GM12878 (cell line): ENCODE measurements at regions of chr3 and their contacts with region 1.

Region 1: DNA sequence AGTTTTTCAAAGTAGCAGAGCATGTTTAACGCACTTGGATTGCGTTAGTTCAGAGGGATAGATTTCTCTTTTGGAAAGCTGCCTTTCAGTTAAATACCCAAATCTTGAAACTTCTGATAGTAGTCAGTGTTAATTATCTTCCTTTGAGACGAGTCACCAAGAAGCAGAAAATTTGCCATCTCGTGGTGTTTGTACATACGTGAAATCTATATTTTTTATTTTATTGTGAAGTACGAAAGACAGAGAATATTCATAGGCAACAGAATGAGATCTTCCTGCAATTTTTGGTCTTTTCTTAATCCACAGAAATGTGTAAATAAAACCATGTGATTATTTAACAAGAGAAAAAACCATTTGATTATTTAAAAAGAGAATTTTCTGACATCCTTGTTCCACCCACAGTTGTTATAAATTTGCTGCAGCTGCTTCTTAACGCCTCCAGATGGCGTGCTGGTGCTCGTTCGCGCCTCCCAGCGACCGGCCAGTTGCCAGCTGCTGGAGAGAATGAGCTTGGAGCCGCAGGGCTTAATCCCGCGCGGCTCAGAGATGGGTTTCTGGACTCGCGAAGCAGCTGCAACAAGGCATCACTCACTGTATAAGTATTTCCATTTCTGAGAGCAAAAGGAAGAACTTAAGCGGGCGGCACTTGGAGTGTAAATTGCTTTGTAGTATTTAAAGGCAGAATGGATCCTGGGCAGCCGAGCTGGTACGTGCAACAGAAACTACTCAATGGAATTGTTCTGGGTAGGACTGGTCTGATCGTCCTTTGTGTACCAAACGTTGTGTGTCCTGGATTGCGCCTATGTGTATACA is 10.5 kb upstream of the SLITRK3 start:
- DNase-seq: no peak
- ATAC-seq: peak; percentile 89
- H3K4me3 ChIP-seq: no peak overlapping the region
- H3K27ac ChIP-seq: no peak overlapping the region
- H3K4me1 ChIP-seq: no peaks in the 10 kb centered on the region
- H3K27me3 ChIP-seq: no peaks in the 10 kb centered on the region
- CTCF ChIP-seq: peak; percentile 82 to 95 (median 90)
- EP300 ChIP-seq: no peak
- POLR2A ChIP-seq: no peak
- RAD21 ChIP-seq: peak; percentile 73

Region 2: DNA sequence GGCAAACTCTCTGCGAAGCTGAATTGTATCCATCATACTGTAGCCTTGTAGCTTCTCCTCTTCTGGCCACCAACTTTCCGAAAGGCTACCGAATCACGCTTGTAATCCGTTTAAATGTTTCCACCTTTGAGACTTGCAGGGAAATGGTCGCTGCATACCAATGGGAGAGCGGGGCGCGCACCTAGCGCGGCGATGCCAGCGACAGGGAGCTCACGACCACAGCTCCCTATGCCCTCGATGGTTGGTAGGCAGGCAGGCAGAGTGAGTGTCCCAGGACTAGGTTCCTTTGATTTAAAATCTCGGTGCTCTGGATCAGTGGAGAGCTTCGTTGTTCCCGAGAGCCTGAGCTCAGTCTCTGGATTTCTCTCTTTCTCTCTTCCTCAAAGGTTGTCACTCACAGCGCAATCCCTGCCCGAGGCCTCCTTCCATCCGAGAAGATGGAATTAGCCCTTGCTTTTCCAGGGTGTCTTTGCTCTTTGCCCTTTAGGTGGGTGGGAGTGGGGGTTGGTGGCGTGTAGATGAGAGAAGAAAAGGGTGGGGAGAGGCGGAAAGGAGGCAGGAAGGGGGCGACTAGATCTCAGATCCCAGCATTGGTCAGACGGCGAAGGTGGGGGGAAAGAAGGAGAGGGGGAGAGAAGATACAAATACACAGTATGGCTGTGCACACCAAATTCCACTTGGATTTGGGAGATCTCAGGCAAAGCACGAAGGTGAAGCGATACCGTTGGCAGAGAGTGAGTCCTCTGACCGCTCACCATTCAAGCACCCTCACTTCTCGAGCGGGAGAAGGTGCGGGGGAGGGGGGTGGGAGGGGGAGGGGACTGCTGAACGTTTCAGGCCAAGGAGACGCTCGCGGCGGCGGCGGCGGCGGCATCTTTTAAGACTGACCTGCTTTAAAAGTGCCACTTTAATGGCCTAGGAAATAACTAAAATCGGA is 10.8 kb before region 1 on chr3 and contains the start of gene SLITRK3:
- CTCF ChIA-PET with region 1: interaction called, 19 read pairs
- POLR2A ChIA-PET with region 1: interaction called, 5 read pairs
- RAD21 ChIA-PET with region 1: interaction called, 3 read pairs
- SMC1A ChIA-PET with region 1: interaction called, 3 read pairs
- in situ Hi-C with region 1: no loop called
- intact Hi-C with region 1: no loop called
- DNase-seq: no peak
- ATAC-seq: no peak; the same call in 2 of the 3 replicates
- H3K4me3 ChIP-seq: no peak within 1 kb of the TSS
- H3K27ac ChIP-seq: no peak within 1 kb of the TSS
- H3K4me1 ChIP-seq: no peaks in the 10 kb centered on the region
- H3K27me3 ChIP-seq: peaks cover 7 to 11% of the 10 kb centered on the region in 2 experiments
- CTCF ChIP-seq: no peak
- EP300 ChIP-seq: no peak
- POLR2A ChIP-seq: no peak
- RAD21 ChIP-seq: no peak
- polyA plus RNA-seq, gene SLITRK3: not detected

Region 3: DNA sequence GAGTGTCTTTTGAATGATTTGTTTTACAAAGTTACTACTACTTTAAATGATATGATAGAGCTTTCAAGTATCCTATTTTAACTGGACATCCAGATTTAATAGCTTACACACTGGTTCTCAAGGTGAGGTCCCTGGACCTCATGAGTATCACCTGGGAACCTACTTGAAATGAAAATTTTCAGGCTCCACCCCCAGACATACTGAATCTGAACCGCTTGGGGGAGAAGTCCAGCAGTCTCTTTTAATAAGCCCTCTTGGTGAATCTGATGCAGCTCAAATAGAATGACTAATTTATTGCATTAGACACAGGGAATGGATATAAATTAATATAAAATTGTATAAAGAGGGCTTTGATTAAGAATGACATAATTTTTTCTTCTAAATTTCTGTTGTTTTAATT is 18.9 kb after region 1 on chr3:
- CTCF ChIA-PET with region 1: interaction called, 10 read pairs
- POLR2A ChIA-PET with region 1: no interaction called
- RAD21 ChIA-PET with region 1: interaction called, 3 read pairs
- SMC1A ChIA-PET with region 1: no interaction called
- in situ Hi-C with region 1: no loop called
- intact Hi-C with region 1: no loop called
- DNase-seq: no peak
- ATAC-seq: no peak
- H3K4me3 ChIP-seq: no peak overlapping the region
- H3K27ac ChIP-seq: no peak overlapping the region
- H3K4me1 ChIP-seq: no peaks in the 10 kb centered on the region
- H3K27me3 ChIP-seq: no peaks in the 10 kb centered on the region
- CTCF ChIP-seq: no peak
- EP300 ChIP-seq: no peak
- POLR2A ChIP-seq: no peak
- RAD21 ChIP-seq: no peak

Region 4: GRCh38 chr3:165254812-165255211 is 48.2 kb after region 1 on chr3:
- CTCF ChIA-PET with region 1: interaction called, 17 read pairs
- POLR2A ChIA-PET with region 1: no interaction called
- RAD21 ChIA-PET with region 1: no interaction called
- SMC1A ChIA-PET with region 1: interaction called, 8 read pairs
- in situ Hi-C with region 1: no loop called
- intact Hi-C with region 1: no loop called
- DNase-seq: no peak
- ATAC-seq: peak; percentile 84
- H3K4me3 ChIP-seq: no peak overlapping the region
- H3K27ac ChIP-seq: no peak overlapping the region
- H3K4me1 ChIP-seq: no peaks in the 10 kb centered on the region
- H3K27me3 ChIP-seq: no peaks in the 10 kb centered on the region
- CTCF ChIP-seq: peak in 1 of 3 experiments; percentile 15; a peak in 2 of 6 replicates
- EP300 ChIP-seq: no peak
- POLR2A ChIP-seq: no peak
- RAD21 ChIP-seq: peak; percentile 44

Region 5: DNA sequence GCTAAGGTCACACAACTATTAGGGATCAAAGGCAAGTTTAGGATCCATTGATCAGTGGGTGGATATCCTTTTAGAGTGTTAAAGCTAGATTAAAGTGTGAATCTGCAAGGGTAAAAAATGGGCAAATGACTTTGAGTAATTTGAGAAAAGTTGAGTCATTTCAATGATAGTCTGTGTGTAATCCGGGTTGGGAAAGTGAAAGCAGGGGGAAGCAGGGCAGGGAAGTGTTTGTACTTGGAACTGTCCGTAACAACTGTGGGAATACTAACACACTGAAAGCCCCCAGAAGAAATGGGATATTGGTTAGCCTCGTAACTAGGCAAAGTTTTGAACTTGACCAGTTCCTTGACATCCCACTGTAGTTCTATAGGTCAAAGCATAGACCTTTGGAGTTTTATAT is 176.7 kb after region 1 on chr3:
- CTCF ChIA-PET with region 1: no interaction called
- POLR2A ChIA-PET with region 1: no interaction called
- RAD21 ChIA-PET with region 1: no interaction called
- SMC1A ChIA-PET with region 1: no interaction called
- in situ Hi-C with region 1: no loop called
- intact Hi-C with region 1: no loop called
- DNase-seq: no peak
- ATAC-seq: no peak
- H3K4me3 ChIP-seq: no peak overlapping the region
- H3K27ac ChIP-seq: no peak overlapping the region
- H3K4me1 ChIP-seq: no peaks in the 10 kb centered on the region
- H3K27me3 ChIP-seq: no peaks in the 10 kb centered on the region
- CTCF ChIP-seq: no peak
- EP300 ChIP-seq: no peak
- POLR2A ChIP-seq: no peak
- RAD21 ChIP-seq: no peak

Region 6: DNA sequence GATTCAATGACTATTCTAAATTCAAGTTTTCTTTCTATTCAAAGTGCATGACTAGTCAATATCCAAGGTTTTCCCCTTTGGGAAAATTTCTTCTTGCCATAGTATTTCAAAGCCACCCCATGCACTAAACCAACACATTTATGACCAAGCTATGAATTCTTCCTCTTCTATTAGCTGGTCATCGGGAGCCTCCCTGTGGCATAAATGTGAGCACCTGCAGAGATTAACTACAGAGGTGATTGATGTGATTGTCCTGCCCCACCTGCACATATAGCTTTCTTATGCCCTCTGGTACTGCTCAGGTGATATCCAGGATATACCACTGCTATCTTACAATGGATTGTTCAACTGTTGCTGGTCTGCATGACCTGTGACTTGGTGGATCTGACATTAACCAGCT is 1478.6 kb after region 1 on chr3:
- CTCF ChIA-PET with region 1: interaction called, 12 read pairs
- POLR2A ChIA-PET with region 1: no interaction called
- RAD21 ChIA-PET with region 1: interaction called, 6 read pairs
- SMC1A ChIA-PET with region 1: no interaction called
- in situ Hi-C with region 1: no loop called
- intact Hi-C with region 1: no loop called
- DNase-seq: no peak
- ATAC-seq: peak; percentile 34; the same call in 2 of the 3 replicates
- H3K4me3 ChIP-seq: no peak overlapping the region
- H3K27ac ChIP-seq: no peak overlapping the region
- H3K4me1 ChIP-seq: no peaks in the 10 kb centered on the region
- H3K27me3 ChIP-seq: no peaks in the 10 kb centered on the region
- CTCF ChIP-seq: peak in 1 of 3 experiments; percentile 20; a peak in 1 of 6 replicates
- EP300 ChIP-seq: no peak
- POLR2A ChIP-seq: no peak
- RAD21 ChIP-seq: no peak